ENCODE measurements at regions of chr12 and their contacts with region 1.

Region 1: DNA sequence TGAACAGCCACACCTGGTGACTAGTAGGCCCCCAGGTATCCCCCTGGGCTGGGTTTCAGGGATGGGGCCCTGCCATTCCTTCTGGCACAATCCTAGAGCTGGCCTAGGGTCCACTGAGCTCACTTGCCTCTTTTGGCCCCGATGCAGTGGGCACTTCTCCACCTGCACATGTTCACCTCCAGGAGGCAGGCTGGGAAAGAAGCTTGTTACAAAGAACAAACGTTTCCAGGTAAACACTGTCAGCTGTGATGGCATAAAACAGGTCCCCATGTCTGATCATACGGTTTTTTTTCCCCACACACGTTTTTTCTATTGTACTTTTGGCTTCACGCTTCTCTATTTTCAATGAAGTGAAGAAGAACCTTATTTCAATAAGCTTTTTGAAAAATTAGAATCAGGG is 15.8 kb upstream of the HVCN1 start:
- DNase-seq: peak; percentile 58
- H3K4me3 Mint-ChIP-seq: no peak overlapping the region
- H3K27ac Mint-ChIP-seq: no peak overlapping the region
- H3K4me1 Mint-ChIP-seq: peaks cover 3% of the 10 kb centered on the region
- H3K27me3 Mint-ChIP-seq: no peaks in the 10 kb centered on the region

Region 2: GRCh38 chr12:110809149-110809548 is 104.4 kb after region 1 on chr12:
- CTCF ChIA-PET with region 1: no interaction called
- intact Hi-C with region 1: no loop called
- DNase-seq: no peak
- H3K4me3 Mint-ChIP-seq: no peak overlapping the region
- H3K27ac Mint-ChIP-seq: no peak overlapping the region
- H3K4me1 Mint-ChIP-seq: peaks cover 6% of the 10 kb centered on the region
- H3K27me3 Mint-ChIP-seq: peaks cover 2% of the 10 kb centered on the region

Region 3: DNA sequence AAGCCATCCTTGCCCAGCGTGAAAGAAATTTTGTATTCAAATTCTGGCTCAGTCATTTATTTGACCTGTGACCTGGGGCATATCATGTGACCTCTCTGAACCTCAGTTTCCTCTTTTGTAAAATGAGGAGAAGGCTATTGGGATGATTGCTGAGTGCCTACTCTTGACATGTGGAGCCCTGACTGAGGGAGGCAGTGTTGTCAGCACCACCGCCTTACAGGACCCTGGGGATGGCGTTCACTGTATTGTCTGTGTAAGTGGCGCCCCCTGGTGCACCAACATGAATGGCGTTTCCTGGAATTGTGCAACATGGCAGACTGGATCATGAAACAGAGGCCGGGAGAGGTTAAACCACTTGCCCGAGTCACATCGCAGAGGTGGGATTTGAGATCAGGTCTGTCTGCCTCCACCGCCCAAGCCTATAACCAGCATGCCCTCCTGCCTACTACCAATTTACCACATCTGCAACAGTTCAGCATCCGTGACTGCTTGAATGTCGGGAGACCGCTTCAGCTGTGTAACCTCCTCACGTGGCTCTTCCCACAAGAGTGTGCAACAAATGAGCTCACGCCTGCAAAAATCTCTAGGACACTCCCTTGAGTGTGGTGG is 121.9 kb after region 1 on chr12:
- CTCF ChIA-PET with region 1: interaction called, 23 read pairs
- intact Hi-C with region 1: loop called (anchors 1 kb)
- DNase-seq: peak; percentile 97
- H3K4me3 Mint-ChIP-seq: peak overlapping the region; percentile 7
- H3K27ac Mint-ChIP-seq: peak overlapping the region; percentile 50
- H3K4me1 Mint-ChIP-seq: peaks cover 15% of the 10 kb centered on the region
- H3K27me3 Mint-ChIP-seq: no peaks in the 10 kb centered on the region